Activated naive CD4-positive, alpha-beta T cell treated with anti-CD3 and anti-CD28 coated beads, Interleukin-2, amount 10 ng/mL, durations not matched to agents 7 days and 5 days (primary cell): ENCODE measurements at regions of chr9 and their contacts with region 1.

Region 1: GRCh38 chr9:128034821-128035764 is 32.0 kb downstream of the NAIF1 start:
- DNase-seq: peak; percentile 78
- H3K4me3 Mint-ChIP-seq: no peak overlapping the region
- H3K27ac Mint-ChIP-seq: peak overlapping the region; percentile 63
- H3K4me1 Mint-ChIP-seq: peaks cover 47% of the 10 kb centered on the region
- H3K27me3 Mint-ChIP-seq: peaks cover 7% of the 10 kb centered on the region

Region 2: GRCh38 chr9:127937388-127938280 is 97.5 kb before region 1 on chr9 and contains the start of gene DPM2:
- CTCF ChIA-PET with region 1: interaction called, 170 read pairs
- DNase-seq: peak; percentile 93
- H3K4me3 Mint-ChIP-seq: peak within 1 kb of the TSS; percentile 87
- H3K27ac Mint-ChIP-seq: peak within 1 kb of the TSS; percentile 91
- H3K4me1 Mint-ChIP-seq: peaks cover 55% of the 10 kb centered on the region
- H3K27me3 Mint-ChIP-seq: peaks cover 14% of the 10 kb centered on the region

Region 3: DNA sequence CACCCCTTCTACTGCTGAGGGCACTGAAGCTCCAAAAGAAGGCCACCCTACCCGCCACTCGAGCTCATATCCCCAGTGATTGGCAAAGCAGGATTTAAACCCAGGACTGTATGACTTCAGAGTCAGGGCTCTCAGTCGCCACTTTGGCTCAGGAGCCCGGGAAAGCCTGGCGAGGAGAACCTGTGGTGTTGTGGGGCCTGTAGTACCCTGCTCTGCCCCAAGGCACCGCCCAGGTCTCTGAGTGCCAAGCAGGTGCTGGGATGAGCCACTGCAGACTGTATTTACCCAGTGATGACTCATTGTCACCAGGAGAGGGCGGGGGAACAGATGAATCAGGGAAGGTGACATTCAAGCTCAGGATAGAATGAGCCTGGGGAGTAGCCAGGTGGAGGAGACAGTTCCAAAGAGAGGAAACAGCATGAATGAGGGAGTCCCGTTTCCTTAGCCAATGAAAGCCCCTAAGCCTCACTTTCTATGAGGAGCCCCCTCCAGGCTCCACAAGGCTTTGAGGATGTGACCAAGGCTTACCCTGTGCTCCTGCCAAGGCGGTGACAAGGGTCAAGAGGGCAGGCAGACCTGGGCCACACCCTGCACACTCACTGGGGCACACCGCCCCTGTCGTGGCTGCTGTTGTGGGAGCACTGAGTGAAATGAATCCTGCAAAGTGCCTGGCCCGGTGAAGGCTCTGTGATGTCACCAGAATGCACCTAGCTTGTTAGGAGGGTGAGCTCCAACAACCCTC is 79.6 kb before region 1 on chr9:
- CTCF ChIA-PET with region 1: interaction called, 247 read pairs
- DNase-seq: peak; percentile 83
- H3K4me3 Mint-ChIP-seq: peak overlapping the region; percentile 32
- H3K27ac Mint-ChIP-seq: peak overlapping the region; percentile 69
- H3K4me1 Mint-ChIP-seq: peaks cover 94% of the 10 kb centered on the region
- H3K27me3 Mint-ChIP-seq: no peaks in the 10 kb centered on the region

Region 4: GRCh38 chr9:127980706-127981558 is 54.2 kb before region 1 on chr9 and contains the start of gene EEIG1:
- CTCF ChIA-PET with region 1: interaction called, 78 read pairs
- DNase-seq: peak; percentile 98
- H3K4me3 Mint-ChIP-seq: peak within 1 kb of the TSS; percentile 94
- H3K27ac Mint-ChIP-seq: peak within 1 kb of the TSS; percentile 97
- H3K4me1 Mint-ChIP-seq: peaks cover 46% of the 10 kb centered on the region
- H3K27me3 Mint-ChIP-seq: no peaks in the 10 kb centered on the region